ENCODE measurements at regions of chr17 and their contacts with region 1.

Region 1: GRCh38 chr17:67931233-67931632 is 65.0 kb downstream of the C17orf58 start:
- DNase-seq: no peak
- ATAC-seq: no peak
- H3K4me3 Mint-ChIP-seq: no peak overlapping the region
- H3K27ac Mint-ChIP-seq: no peak overlapping the region
- H3K4me1 Mint-ChIP-seq: no peaks in the 10 kb centered on the region
- H3K27me3 Mint-ChIP-seq: no peaks in the 10 kb centered on the region
- CTCF ChIP-seq: no peak

Region 2: DNA sequence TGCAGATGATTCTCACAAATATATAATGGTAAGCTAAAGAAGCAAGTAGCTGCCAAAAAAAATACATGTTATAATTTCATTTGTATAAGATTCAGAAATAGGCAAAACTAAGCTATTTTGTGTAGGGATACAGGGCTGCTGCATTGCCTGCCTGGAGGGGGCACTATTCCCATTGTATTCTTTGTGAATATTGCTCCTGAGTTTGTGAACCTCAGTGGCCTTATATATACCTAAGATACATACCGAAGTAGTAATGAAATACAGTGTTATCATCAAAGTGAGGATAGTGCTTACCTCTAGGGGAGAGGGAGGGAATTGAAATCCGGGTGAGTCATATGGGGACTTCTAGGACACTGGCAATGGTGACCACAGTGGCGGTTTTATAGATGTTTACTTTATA is 11.6 kb after region 1 on chr17:
- CTCF ChIA-PET with region 1: interaction called, 14 read pairs
- POLR2A ChIA-PET with region 1: no interaction called
- intact Hi-C with region 1: no loop called
- DNase-seq: no peak
- ATAC-seq: no peak
- H3K4me3 Mint-ChIP-seq: no peak overlapping the region
- H3K27ac Mint-ChIP-seq: no peak overlapping the region
- H3K4me1 Mint-ChIP-seq: no peaks in the 10 kb centered on the region
- H3K27me3 Mint-ChIP-seq: no peaks in the 10 kb centered on the region
- CTCF ChIP-seq: peak; percentile 54